ENCODE measurements at regions of chr9 and their contacts with region 1.

Region 1: DNA sequence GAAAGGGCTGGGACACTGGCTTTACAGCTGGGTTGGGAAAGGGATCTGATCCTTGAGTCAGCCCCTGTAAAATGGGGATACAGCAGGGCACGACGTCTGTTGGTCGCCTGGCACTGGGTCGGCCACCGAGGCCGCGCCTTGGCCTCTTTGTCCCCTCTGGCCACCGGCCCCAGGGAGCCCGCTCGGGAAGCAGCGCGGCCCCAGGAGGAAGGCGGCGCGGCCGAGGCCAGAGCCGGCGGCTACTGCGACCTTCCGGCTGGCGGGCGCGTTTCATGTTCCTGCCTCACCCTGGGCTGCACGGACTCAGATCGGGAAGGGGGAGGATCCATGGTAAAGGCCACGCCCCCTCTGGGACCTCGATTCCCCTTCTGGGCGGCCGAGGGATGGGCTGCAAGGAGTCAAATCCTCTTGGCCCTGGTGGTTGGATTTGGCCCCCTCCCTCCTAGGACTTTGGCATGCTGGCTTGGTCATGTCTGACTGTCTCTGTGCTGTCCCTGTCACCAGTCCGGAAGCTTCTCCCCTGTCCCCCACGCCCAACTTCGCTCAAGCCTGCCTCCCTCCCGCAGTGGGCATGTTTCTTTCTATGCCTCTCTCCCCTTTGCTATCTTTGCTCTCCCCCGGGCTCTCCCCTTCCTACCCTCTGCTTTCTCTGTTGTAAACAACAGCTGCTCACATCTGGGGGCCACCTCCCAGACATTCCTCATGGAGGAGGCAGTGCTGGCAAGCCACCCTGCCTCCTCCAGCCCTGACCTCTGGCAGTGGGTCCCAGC is 25.8 kb downstream of the FPGS start:
- DNase-seq: peak; percentile 70 to 97
- H3K4me3 ChIP-seq: peak overlapping the region; percentile 23 to 55 (median 36); a peak in 6 of 8 replicates
- H3K27ac ChIP-seq: peak overlapping the region; percentile 2; the same call in 1 of the 2 replicates
- H3K4me1 ChIP-seq: peaks cover 0 to 17% (median 12%) of the 10 kb centered on the region in 4 experiments; a peak in 6 of 7 replicates
- H3K27me3 ChIP-seq: peaks cover 0 to 12% (median 7%) of the 10 kb centered on the region in 4 experiments; a peak in 5 of 7 replicates
- CTCF ChIP-seq: 0 out of 4 replicates have a peak, but pooled peaks of 1 of the 3 experiments have one; percentile 9
- EP300 ChIP-seq: no peak
- POLR2A ChIP-seq: peak in 1 of 2 experiments; percentile 89; a peak in 2 of 3 replicates
- RAD21 ChIP-seq: no peak; a peak in 1 of 4 replicates

Region 2: DNA sequence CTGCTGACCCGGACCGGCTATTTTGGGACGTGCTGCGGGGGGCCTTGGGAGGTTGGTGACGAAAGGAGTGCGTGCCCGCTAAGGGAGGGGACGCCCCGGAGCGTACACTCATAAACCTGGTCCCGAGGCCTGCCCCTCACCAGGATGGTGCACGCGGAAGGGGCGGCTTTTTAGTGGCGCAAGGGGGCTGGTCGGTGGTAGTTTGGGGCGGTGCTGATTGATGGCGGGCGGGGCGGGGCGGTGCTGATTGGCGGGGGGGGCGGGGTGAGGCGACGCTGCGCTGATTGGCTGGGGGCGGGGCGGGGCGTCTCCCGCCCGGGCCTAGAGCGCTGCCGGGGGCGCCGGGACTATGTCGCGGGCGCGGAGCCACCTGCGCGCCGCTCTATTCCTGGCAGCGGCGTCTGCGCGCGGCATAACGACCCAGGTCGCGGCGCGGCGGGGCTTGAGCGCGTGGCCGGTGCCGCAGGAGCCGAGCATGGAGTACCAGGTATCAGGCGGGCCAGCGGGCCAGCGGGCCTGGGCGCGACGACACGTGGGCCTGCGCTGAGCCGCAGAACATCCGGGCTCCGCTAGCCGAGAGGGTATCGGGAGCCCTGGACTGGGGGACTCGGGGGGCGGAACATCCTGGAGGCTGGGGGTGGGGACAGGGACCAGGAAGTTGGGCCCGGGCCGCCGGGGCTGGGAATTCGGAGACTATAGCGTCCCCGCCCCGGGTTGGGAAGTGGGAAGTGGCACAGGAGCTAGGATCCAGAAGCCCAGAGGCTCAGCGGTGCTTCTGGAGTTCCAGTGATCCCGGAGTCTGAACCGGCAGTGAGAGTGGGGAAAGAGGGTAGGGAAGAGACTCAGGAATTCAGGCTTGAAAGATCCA is 25.6 kb before region 1 on chr9 and contains the start of gene FPGS:
- CTCF ChIA-PET with region 1: interaction called, 19 read pairs
- POLR2A ChIA-PET with region 1: interaction called, 5 read pairs
- DNase-seq: peak; percentile 65 to 88
- H3K4me3 ChIP-seq: peak within 1 kb of the TSS; percentile 61 to 86 (median 81)
- H3K27ac ChIP-seq: peak within 1 kb of the TSS; percentile 87
- H3K4me1 ChIP-seq: peaks cover 5 to 9% (median 6%) of the 10 kb centered on the region in 4 experiments; a peak in 6 of 7 replicates
- H3K27me3 ChIP-seq: no peaks in the 10 kb centered on the region
- CTCF ChIP-seq: no peak
- EP300 ChIP-seq: 0 out of 3 replicates have a peak, but pooled peaks of 1 of the 2 experiments have one; percentile 15
- POLR2A ChIP-seq: peak in 1 of 2 experiments; percentile 88; a peak in 2 of 3 replicates
- RAD21 ChIP-seq: no peak
- total RNA-seq, gene FPGS: 62.4 and 63.7 TPM in 2 replicates

Region 3: DNA sequence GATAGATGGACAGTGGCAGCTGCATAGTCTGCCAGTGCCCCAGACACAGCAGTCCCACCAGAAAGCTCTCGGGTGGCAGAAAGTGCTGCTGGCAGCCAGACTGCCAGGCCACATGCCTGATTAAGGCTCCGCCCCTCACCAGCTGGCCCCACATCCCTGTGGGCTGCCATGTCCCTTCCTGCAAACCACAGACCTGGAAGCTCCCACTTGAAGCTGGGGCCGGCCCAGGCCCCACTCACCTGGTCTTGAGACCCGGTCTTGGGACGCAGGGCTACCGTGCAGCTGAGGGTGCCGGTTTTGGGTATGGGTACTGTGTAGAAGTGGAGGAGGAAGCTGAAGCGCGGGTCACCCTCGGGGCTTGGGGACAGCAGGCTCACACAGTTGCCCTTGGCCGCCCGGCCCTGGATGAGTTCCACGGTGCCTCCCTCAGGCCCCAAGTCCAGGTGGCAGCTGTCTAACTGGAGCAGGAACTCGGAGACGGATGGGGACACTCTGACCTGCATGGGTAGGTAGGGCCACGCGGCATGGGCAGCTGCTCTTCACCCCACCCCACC is 10.5 kb before region 1 on chr9:
- CTCF ChIA-PET with region 1: interaction called, 19 read pairs
- POLR2A ChIA-PET with region 1: interaction called, 34 read pairs
- DNase-seq: no peak
- H3K4me3 ChIP-seq: no peak overlapping the region
- H3K27ac ChIP-seq: no peak overlapping the region
- H3K4me1 ChIP-seq: no peaks in the 10 kb centered on the region
- H3K27me3 ChIP-seq: no peaks in the 10 kb centered on the region
- CTCF ChIP-seq: no peak
- EP300 ChIP-seq: no peak
- POLR2A ChIP-seq: no peak
- RAD21 ChIP-seq: no peak

Region 4: DNA sequence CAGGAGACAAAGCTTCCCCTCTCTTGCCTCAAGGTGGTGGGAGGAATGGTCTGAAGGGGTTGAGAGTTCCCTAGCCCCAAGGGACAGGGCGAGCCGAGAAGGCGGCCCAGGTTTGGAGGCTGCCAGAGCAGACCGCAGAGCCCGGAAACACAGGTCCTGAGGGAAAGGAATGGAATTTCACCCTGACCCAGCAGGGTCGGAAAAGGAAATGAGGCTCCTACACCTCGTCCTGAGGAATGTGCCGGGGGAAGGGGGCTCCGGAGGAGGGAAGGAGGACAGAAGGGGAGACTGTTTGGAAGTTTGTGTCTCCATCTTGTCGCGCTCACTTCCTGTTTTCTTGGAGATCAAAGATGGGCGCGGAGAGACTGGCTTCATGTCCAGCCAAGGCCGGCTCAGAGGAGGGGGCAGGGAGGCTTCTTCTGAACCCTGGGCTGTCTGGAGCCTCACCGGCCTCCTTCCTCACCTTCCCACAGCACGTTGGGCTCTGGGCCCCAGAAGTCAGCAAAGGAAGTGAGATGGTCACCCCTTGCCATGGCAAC is 16.4 kb after region 1 on chr9:
- CTCF ChIA-PET with region 1: interaction called, 22 read pairs
- POLR2A ChIA-PET with region 1: interaction called, 5 read pairs
- DNase-seq: no peak
- H3K4me3 ChIP-seq: no peak overlapping the region
- H3K27ac ChIP-seq: no peak overlapping the region; the same call in 1 of the 2 replicates
- H3K4me1 ChIP-seq: peaks cover 0 to 8% (median 5%) of the 10 kb centered on the region in 4 experiments; a peak in 6 of 7 replicates
- H3K27me3 ChIP-seq: no peaks in the 10 kb centered on the region; a peak in 1 of 7 replicates
- CTCF ChIP-seq: no peak
- EP300 ChIP-seq: no peak
- POLR2A ChIP-seq: no peak
- RAD21 ChIP-seq: no peak

Region 5: GRCh38 chr9:127862075-127863011 is 33.9 kb after region 1 on chr9:
- CTCF ChIA-PET with region 1: interaction called, 116 read pairs
- POLR2A ChIA-PET with region 1: interaction called, 4 read pairs
- DNase-seq: no peak
- H3K4me3 ChIP-seq: no peak overlapping the region
- H3K27ac ChIP-seq: no peak overlapping the region
- H3K4me1 ChIP-seq: no peaks in the 10 kb centered on the region; a peak in 1 of 7 replicates
- H3K27me3 ChIP-seq: no peaks in the 10 kb centered on the region; a peak in 1 of 7 replicates
- CTCF ChIP-seq: no peak
- EP300 ChIP-seq: no peak
- POLR2A ChIP-seq: no peak
- RAD21 ChIP-seq: no peak

Region 6: DNA sequence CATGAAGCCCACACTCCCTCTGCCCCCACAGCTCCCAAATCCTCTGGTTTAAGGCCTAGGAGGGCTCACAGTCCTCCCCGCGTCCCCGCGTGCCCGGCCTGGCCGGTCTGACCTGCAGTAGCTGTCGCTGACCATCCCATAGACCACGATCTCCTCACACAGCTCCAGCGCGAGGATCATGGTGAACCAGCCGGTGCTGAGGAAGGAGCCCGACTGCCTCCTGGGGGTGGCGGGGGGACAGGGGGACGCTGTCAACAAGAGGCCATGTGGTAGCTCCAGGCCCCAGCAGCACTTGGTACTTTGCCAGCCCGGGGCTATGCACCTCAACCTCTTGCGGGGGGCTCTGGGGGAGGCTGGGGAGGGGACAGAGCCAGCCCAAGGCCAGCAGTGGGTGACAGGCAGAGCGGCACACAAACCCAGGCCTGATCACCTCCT is 81.4 kb after region 1 on chr9:
- CTCF ChIA-PET with region 1: no interaction called
- POLR2A ChIA-PET with region 1: no interaction called
- DNase-seq: no peak
- H3K4me3 ChIP-seq: no peak overlapping the region
- H3K27ac ChIP-seq: no peak overlapping the region
- H3K4me1 ChIP-seq: peaks cover 0 to 5% (median 0%) of the 10 kb centered on the region in 4 experiments; a peak in 3 of 7 replicates
- H3K27me3 ChIP-seq: no peaks in the 10 kb centered on the region
- CTCF ChIP-seq: no peak
- EP300 ChIP-seq: no peak
- POLR2A ChIP-seq: no peak
- RAD21 ChIP-seq: no peak

Region 7: DNA sequence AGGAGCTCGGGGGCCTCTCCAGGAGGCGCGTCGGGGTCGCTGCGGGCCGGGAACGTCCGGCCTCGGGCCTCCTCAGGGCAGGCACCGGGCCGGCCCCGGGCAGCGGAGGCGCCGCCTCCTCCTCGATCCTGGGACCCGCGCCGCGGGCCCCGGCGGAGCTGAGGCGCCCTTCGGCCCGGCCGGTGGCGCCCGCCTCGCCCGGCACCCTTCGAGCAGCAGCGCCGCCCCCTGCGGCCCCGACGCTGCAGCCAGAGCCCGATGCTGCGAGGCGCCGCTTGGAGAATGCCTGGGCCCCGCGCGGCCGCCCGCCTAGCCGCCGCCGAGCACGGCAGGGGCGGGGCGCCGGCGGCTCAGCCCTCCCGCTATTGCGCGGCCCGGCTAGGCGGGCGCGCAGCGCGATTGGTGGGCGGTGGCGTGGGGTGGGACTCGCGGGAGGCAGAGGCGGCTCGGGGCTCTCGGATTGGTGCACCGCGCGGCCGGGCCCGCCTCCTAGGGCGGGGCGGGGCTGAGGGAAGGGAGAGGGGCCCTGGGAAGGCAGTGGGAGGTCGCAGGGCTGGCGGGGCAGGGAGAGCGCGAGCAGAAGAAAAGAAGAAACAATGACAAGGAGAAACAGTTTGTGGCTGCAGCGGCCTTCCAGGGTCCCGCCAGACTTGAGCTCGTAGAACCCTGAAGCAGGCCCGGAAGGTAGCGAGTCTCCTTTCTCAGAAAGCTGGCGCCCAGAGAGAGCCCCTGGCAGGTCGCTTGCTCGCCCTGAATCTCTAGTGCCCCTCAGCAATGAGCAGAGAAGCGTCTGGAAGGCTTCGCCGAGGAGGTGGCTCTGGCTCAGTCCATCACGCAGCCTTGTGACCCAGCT is 152.5 kb after region 1 on chr9 and contains the start of gene EEIG1:
- CTCF ChIA-PET with region 1: no interaction called
- POLR2A ChIA-PET with region 1: no interaction called
- DNase-seq: peak; percentile 80 to 97
- H3K4me3 ChIP-seq: peak within 1 kb of the TSS; percentile 88 to 99 (median 93)
- H3K27ac ChIP-seq: peak within 1 kb of the TSS; percentile 79
- H3K4me1 ChIP-seq: peaks cover 4 to 34% (median 24%) of the 10 kb centered on the region in 4 experiments
- H3K27me3 ChIP-seq: no peaks in the 10 kb centered on the region
- CTCF ChIP-seq: no peak; a peak in 1 of 4 replicates
- EP300 ChIP-seq: no peak
- POLR2A ChIP-seq: no peak; a peak in 2 of 3 replicates
- RAD21 ChIP-seq: no peak
- total RNA-seq, gene EEIG1: 50.8 and 51.3 TPM in 2 replicates